ENCODE measurements at regions of chr2 and their contacts with region 1.

Region 1: DNA sequence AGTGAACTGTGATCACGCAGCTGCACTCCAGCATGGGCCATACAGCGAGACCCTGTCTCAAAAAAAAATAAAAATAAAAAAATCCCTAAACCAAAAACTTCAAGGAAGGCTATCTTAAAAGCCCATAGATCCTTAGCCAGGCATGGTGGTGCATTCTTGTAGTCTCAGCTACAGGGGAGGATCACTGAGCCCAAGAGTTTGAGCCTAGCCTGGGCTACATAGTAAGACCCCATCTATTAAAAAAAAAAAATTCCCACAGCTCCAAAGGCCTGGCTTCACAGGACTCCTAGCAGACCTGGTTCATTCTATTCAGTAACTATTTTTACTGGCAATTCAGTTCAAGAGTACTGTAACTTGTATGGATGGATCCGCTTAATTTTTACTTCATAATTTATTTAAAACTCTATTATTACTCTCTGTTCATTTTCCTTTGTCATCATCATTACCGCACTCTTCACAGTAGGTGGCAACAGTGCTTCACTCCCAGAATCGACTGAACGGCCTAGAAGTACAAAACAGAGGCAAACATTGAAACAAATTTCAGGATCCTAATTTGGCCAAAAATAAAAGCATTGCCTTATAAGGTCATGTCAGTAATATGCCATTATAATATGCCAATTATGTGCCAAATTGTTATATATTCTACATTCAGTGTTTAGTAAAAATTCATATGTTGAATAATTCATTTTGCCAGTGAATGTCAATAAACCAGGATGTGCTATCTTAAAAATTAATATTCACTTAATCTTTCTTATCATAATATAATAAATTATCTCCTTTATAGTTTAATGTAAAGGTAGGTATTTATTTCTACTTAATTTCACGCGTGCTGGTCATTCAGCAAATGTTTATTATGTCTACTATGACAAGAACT is 14.3 kb upstream of the STAM2 start:
- DNase-seq: peak; percentile 77
- ATAC-seq: peak; percentile 99
- H3K4me3 ChIP-seq: no peak overlapping the region
- H3K27ac ChIP-seq: no peak overlapping the region
- H3K4me1 ChIP-seq: no peaks in the 10 kb centered on the region
- H3K27me3 ChIP-seq: no peaks in the 10 kb centered on the region
- CTCF ChIP-seq: peak; percentile 96
- POLR2A ChIP-seq: peak; percentile 52; the same call in 1 of the 2 replicates
- RAD21 ChIP-seq: peak; percentile 97

Region 2: GRCh38 chr2:152566728-152567069 is 376.8 kb after region 1 on chr2:
- CTCF ChIA-PET with region 1: no interaction called
- POLR2A ChIA-PET with region 1: no interaction called
- dilution Hi-C with region 1: no loop called
- in situ Hi-C with region 1: no loop called
- intact Hi-C with region 1: loop called (anchors 5 kb)
- DNase-seq: peak; percentile 56
- ATAC-seq: no peak
- H3K4me3 ChIP-seq: no peak overlapping the region
- H3K27ac ChIP-seq: no peak overlapping the region
- H3K4me1 ChIP-seq: peaks cover 9% of the 10 kb centered on the region; the same call in 1 of the 2 replicates
- H3K27me3 ChIP-seq: no peaks in the 10 kb centered on the region
- CTCF ChIP-seq: no peak
- POLR2A ChIP-seq: no peak
- RAD21 ChIP-seq: no peak

Region 3: GRCh38 chr2:152635635-152636298 is 445.9 kb after region 1 on chr2:
- CTCF ChIA-PET with region 1: interaction called, 7 read pairs
- POLR2A ChIA-PET with region 1: no interaction called
- dilution Hi-C with region 1: loop called (anchors 25 kb)
- in situ Hi-C with region 1: no loop called
- intact Hi-C with region 1: loop called (anchors 1 kb)
- DNase-seq: peak; percentile 53
- ATAC-seq: peak; percentile 79
- H3K4me3 ChIP-seq: no peak overlapping the region
- H3K27ac ChIP-seq: no peak overlapping the region
- H3K4me1 ChIP-seq: no peaks in the 10 kb centered on the region
- H3K27me3 ChIP-seq: no peaks in the 10 kb centered on the region
- CTCF ChIP-seq: peak; percentile 75
- POLR2A ChIP-seq: no peak
- RAD21 ChIP-seq: peak; percentile 82

Measured in IMR-90 (cell line).